ENCODE measurements at regions of chr1 and their contacts with region 1.

Region 1: GRCh38 chr1:201982623-201983379 is at the start of gene RNPEP:
- DNase-seq: peak; percentile 31
- ATAC-seq: peak; percentile 91
- H3K4me3 ChIP-seq: peak within 1 kb of the TSS; percentile 74 to 91 (median 79)
- H3K27ac ChIP-seq: peak within 1 kb of the TSS; percentile 81
- H3K4me1 ChIP-seq: peaks cover 26% of the 10 kb centered on the region
- H3K27me3 ChIP-seq: no peaks in the 10 kb centered on the region
- CTCF ChIP-seq: peak; percentile 39; the same call in 1 of the 2 replicates
- EP300 ChIP-seq: no peak
- POLR2A ChIP-seq: peak; percentile 78 to 86
- RAD21 ChIP-seq: peak; percentile 9
- total RNA-seq, gene RNPEP: 38.4 and 39.5 TPM in 2 replicates

Region 2: GRCh38 chr1:201888282-201889089 is 94.3 kb before region 1 on chr1 and contains the start of gene SHISA4:
- CTCF ChIA-PET with region 1: no interaction called
- POLR2A ChIA-PET with region 1: no interaction called
- in situ Hi-C with region 1: no loop called
- intact Hi-C with region 1: loop called (anchors 5 kb)
- DNase-seq: peak; percentile 29
- ATAC-seq: peak; percentile 63
- H3K4me3 ChIP-seq: peak within 1 kb of the TSS; percentile 57 to 75 (median 65)
- H3K27ac ChIP-seq: no peak within 1 kb of the TSS
- H3K4me1 ChIP-seq: peaks cover 27% of the 10 kb centered on the region
- H3K27me3 ChIP-seq: peaks cover 5 to 36% of the 10 kb centered on the region in 2 experiments; a peak in 3 of 5 replicates
- CTCF ChIP-seq: no peak; the same call in 1 of the 2 replicates
- EP300 ChIP-seq: no peak
- POLR2A ChIP-seq: no peak
- RAD21 ChIP-seq: no peak
- total RNA-seq, gene SHISA4: 0.24 and 0.51 TPM in 2 replicates